Dendritic cell treated with granulocyte-macrophage colony-stimulating factor and Interleukin-4, amounts not matched to agents 40 ng/mL and 50 ng/mL, for 4 days (primary cell): ENCODE measurements at regions of chr2 and their contacts with region 1.

Region 1: GRCh38 chr2:64653349-64654062 is at the start of gene SERTAD2:
- H3K4me3 Mint-ChIP-seq: peak within 1 kb of the TSS; percentile 89
- H3K27ac Mint-ChIP-seq: peak within 1 kb of the TSS; percentile 95
- H3K4me1 Mint-ChIP-seq: peaks cover 63% of the 10 kb centered on the region
- H3K27me3 Mint-ChIP-seq: no peaks in the 10 kb centered on the region

Region 2: DNA sequence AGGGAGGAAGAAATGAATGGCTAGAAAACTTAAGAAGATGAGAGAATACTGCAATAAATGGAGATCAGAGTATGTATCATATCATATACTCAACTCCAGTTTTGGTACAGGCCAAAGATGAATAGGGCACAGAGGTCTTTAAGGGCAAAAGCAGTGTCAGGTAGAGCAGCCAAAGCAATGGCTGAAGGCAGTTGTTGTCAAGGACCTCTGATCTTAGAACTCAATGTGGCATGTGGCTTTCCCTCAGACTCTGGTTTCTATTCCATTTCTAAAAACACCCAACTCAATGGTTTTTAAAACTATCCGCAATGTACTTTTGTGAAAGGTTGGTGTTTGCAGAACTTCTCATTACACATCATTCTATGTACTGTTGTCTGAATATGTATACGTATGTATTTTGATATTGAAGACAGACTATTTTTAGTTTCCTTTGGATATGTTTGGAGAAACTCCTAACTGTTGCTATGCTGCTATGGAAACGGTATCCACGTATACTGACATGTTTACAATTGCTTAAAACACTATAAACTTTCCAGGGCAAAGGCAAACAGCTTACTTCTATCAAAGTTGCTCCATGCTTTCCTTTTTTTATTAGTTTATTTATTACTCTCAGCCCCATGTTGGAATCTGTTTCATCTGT is 451.2 kb before region 1 on chr2:
- intact Hi-C with region 1: no loop called
- H3K4me3 Mint-ChIP-seq: no peak overlapping the region
- H3K27ac Mint-ChIP-seq: no peak overlapping the region
- H3K4me1 Mint-ChIP-seq: peaks cover 18% of the 10 kb centered on the region
- H3K27me3 Mint-ChIP-seq: no peaks in the 10 kb centered on the region

Region 3: DNA sequence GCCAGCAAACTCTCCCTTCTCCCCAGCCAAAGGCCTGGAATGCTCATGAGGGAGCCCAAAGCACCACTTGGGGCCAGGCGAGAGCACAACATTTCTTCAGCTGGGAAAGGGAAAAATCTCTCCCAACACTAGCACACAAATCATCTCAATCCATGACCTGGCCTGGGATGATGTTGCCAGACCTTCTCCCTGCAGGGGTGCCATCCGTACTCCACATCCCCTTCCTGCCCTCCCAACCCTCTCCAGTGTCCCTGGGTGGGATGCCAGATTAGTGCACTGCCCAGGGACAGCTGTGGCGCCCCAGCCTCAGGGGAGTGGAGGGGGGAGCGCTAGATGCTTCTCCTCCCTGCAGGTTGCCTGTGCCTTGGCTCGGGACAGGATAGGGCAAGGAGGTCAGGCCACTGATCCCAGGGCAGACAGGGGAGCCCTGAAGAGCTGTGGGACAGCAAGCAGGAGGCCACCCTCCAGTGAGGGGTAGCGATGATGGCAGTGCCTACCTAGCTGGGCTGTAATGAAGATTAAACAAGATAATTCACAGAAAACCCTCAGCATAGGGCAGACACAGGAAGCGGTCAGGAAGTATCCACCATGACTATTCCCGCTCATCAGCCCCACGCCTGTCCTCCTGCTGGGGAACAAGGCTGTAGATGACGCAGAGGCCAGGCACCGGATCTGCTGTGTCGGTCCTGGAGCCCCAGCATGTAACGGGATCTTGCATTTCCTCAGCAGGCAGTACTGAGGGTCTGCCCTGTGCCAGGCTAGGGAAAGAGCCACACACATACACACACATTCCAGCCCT is 30.9 kb before region 1 on chr2:
- intact Hi-C with region 1: no loop called
- H3K4me3 Mint-ChIP-seq: no peak overlapping the region
- H3K27ac Mint-ChIP-seq: no peak overlapping the region
- H3K4me1 Mint-ChIP-seq: peaks cover 15% of the 10 kb centered on the region
- H3K27me3 Mint-ChIP-seq: peaks cover 4% of the 10 kb centered on the region

Region 4: DNA sequence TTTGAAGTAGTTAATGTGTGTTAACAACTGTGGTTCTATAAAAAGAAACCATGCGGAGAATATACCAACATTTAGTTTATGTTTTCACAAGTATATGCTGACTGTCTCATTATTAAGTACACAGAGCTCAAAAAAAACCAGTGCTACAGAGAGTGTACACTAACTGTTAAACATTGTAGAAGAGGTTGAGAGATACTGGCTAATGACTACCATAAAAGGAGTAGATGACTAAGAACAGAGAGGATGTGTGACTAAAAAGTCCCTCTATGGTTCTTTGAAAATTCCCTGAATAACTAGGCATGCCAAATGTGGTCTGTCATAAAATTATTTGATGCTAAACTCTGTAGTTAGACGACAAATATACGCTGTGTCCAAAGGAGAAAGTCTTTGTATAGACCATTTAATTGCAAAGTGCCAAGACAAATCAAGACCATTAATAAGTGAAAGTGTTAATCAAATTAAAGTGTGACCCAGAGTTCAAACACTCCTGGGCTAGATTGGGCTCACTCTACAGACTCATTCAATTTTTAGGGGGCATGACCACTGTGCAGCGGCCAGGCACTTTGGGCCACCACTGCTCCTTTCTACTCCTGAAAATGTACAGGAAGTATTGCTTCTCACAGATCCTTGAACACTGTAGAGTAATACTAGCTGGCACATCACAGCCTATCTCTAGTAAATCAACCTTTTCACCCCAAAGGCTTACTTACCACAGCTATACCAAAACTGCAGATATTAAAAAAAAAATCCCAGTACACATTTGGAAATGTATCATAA is 45.4 kb after region 1 on chr2:
- intact Hi-C with region 1: loop called (anchors 5 kb)
- H3K4me3 Mint-ChIP-seq: no peak overlapping the region
- H3K27ac Mint-ChIP-seq: peak overlapping the region; percentile 51
- H3K4me1 Mint-ChIP-seq: peaks cover 53% of the 10 kb centered on the region
- H3K27me3 Mint-ChIP-seq: no peaks in the 10 kb centered on the region

Region 5: GRCh38 chr2:64730551-64731262 is 77.2 kb after region 1 on chr2:
- intact Hi-C with region 1: loop called (anchors 5 kb)
- H3K4me3 Mint-ChIP-seq: peak overlapping the region; percentile 63
- H3K27ac Mint-ChIP-seq: peak overlapping the region; percentile 95
- H3K4me1 Mint-ChIP-seq: peaks cover 48% of the 10 kb centered on the region
- H3K27me3 Mint-ChIP-seq: no peaks in the 10 kb centered on the region

Region 6: GRCh38 chr2:65514555-65515195 is 861.2 kb after region 1 on chr2:
- intact Hi-C with region 1: no loop called
- H3K4me3 Mint-ChIP-seq: no peak overlapping the region
- H3K27ac Mint-ChIP-seq: no peak overlapping the region
- H3K4me1 Mint-ChIP-seq: no peaks in the 10 kb centered on the region
- H3K27me3 Mint-ChIP-seq: peaks cover 1% of the 10 kb centered on the region